A673 (cell line): ENCODE measurements at regions of chr17 and their contacts with region 1.

Region 1: DNA sequence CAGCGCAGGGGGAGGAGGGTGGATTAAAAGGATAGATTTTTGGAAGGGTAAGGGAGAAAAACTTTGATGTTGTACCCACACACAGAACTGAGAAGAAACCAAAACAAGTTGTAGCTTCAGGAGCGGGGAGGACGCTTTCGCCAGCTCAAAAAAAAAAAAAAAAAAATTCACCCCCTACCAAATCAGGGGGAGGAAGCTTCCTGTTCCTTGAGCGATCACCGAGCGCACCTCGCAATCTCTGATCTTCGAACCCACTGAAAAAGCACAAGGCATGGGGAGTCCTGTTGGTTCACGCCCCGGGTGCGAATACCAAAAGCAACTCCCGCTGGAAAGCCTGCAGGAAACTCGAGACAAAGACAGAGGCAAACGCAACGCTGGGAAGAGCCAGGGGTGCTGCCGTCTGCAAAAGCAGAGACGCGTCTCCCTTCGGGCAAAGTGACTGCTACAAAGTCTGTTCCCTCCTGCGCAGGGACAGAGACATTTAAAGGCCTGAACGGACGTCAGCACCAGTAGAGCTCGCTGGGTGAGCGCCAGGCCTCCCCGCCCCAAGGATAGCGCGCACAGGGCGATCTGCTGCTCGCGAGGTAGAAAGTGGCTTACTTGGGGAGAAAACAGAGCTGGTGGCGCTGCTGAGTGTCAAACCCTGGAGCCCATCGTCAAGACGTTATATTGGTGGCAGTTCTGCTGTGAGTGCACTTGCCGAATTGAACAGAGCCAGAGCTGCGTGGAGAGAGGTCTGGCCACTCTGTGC is 190.4 kb downstream of the USP22 start:
- DNase-seq: peak; percentile 80
- H3K4me3 ChIP-seq: peak overlapping the region; percentile 46
- H3K27ac ChIP-seq: no peak overlapping the region
- H3K4me1 ChIP-seq: peaks cover 9% of the 10 kb centered on the region
- H3K27me3 ChIP-seq: peaks cover 14% of the 10 kb centered on the region
- CTCF ChIP-seq: 0 out of 2 replicates have a peak, but pooled peaks have one; percentile 40

Region 2: GRCh38 chr17:20784100-20784665 is 68.2 kb before region 1 on chr17:
- CTCF ChIA-PET with region 1: no interaction called
- POLR2A ChIA-PET with region 1: no interaction called
- intact Hi-C with region 1: no loop called
- DNase-seq: no peak
- H3K4me3 ChIP-seq: no peak overlapping the region
- H3K27ac ChIP-seq: no peak overlapping the region
- H3K4me1 ChIP-seq: no peaks in the 10 kb centered on the region
- H3K27me3 ChIP-seq: no peaks in the 10 kb centered on the region
- CTCF ChIP-seq: no peak

Region 3: DNA sequence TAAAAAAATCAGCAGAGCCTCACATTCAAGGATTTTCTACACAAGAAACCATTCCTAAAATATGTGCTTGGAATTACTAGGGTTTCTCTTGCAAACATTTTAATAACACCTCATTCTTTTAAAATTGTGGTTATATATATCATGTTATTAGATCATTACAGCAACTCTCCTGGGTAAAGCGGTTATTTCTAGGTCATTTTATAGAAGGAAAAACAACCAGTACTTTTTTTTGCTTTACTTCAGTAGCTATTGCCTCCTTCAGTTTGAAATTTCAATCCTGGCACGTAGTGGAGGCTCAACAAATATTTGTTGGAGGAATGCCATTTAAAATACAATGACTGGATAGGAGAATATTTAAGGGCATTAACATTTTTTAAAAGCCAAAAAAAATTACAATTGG is 52.3 kb before region 1 on chr17:
- CTCF ChIA-PET with region 1: interaction called, 3 read pairs
- POLR2A ChIA-PET with region 1: no interaction called
- intact Hi-C with region 1: loop called (anchors 5 kb)
- DNase-seq: no peak
- H3K4me3 ChIP-seq: no peak overlapping the region
- H3K27ac ChIP-seq: no peak overlapping the region
- H3K4me1 ChIP-seq: no peaks in the 10 kb centered on the region
- H3K27me3 ChIP-seq: no peaks in the 10 kb centered on the region
- CTCF ChIP-seq: no peak

Region 4: DNA sequence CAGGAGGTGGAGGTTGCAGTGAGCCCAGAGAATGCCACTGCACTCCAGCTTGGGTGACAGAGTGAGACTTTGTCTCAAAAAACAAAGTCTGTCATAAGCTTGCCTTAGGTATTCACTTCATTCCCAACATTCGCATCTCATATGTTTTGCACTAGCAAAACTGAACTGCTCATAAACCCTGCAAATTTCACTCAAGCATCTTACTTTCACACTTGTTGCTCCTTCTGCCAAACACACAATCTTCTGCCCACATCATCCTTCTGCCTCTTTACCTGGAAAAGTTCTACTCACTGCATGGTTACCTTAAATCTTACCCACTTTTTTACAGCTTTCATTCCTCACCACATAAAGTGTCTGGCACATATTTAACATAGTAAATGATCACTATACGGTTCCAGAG is 37.9 kb after region 1 on chr17:
- CTCF ChIA-PET with region 1: no interaction called
- POLR2A ChIA-PET with region 1: no interaction called
- intact Hi-C with region 1: loop called (anchors 5 kb)
- DNase-seq: no peak
- H3K4me3 ChIP-seq: no peak overlapping the region
- H3K27ac ChIP-seq: no peak overlapping the region
- H3K4me1 ChIP-seq: no peaks in the 10 kb centered on the region
- H3K27me3 ChIP-seq: no peaks in the 10 kb centered on the region
- CTCF ChIP-seq: no peak